CD8-positive, alpha-beta T cell (primary cell): ENCODE measurements at regions of chr1 and their contacts with region 1.

Region 1: DNA sequence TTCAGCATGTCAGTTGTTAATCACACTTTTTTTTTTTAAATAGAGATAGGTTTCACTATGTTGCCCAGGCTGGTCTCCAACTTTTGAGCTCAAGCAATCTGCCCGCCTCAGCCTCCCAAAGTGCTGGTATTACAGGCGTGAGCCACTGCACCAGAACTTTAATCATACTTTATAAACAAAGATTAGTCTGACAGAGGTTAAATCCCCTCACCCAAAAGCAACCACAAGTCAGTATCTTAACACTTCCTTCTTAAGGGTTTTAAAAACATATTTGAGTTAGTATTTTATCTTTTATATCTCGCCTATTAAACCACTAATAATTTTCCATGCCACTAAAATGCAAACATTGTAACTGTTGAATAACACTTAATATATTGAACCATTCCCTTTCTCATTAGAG is 70.2 kb downstream of the COP1 start:
- DNase-seq: no peak
- ATAC-seq: no peak
- H3K4me3 ChIP-seq: no peak overlapping the region
- H3K4me3 Mint-ChIP-seq: no peak overlapping the region
- H3K27ac ChIP-seq: no peak overlapping the region
- H3K27ac Mint-ChIP-seq: no peak overlapping the region
- H3K4me1 ChIP-seq: no peaks in the 10 kb centered on the region
- H3K4me1 Mint-ChIP-seq: peaks cover 43% of the 10 kb centered on the region
- H3K27me3 ChIP-seq: no peaks in the 10 kb centered on the region
- H3K27me3 Mint-ChIP-seq: no peaks in the 10 kb centered on the region
- CTCF ChIP-seq: no peak

Region 2: GRCh38 chr1:176119549-176119948 is 17.3 kb before region 1 on chr1:
- CTCF ChIA-PET with region 1: no interaction called
- POLR2A ChIA-PET with region 1: no interaction called
- intact Hi-C with region 1: no loop called
- DNase-seq: peak in 2 of 9 experiments; percentile 2 to 16
- ATAC-seq: no peak
- H3K4me3 ChIP-seq: no peak overlapping the region
- H3K4me3 Mint-ChIP-seq: no peak overlapping the region
- H3K27ac ChIP-seq: no peak overlapping the region
- H3K27ac Mint-ChIP-seq: no peak overlapping the region
- H3K4me1 ChIP-seq: no peaks in the 10 kb centered on the region
- H3K4me1 Mint-ChIP-seq: no peaks in the 10 kb centered on the region
- H3K27me3 ChIP-seq: no peaks in the 10 kb centered on the region
- H3K27me3 Mint-ChIP-seq: no peaks in the 10 kb centered on the region
- CTCF ChIP-seq: no peak

Region 3: GRCh38 chr1:176174108-176174507 is 37.2 kb after region 1 on chr1:
- CTCF ChIA-PET with region 1: no interaction called
- POLR2A ChIA-PET with region 1: no interaction called
- intact Hi-C with region 1: loop called in 1 of 2 experiments (anchors 5 kb)
- DNase-seq: no peak
- ATAC-seq: no peak
- H3K4me3 ChIP-seq: no peak overlapping the region
- H3K4me3 Mint-ChIP-seq: no peak overlapping the region
- H3K27ac ChIP-seq: no peak overlapping the region
- H3K27ac Mint-ChIP-seq: peak overlapping the region; percentile 13
- H3K4me1 ChIP-seq: no peaks in the 10 kb centered on the region
- H3K4me1 Mint-ChIP-seq: peaks cover 33% of the 10 kb centered on the region
- H3K27me3 ChIP-seq: no peaks in the 10 kb centered on the region
- H3K27me3 Mint-ChIP-seq: no peaks in the 10 kb centered on the region
- CTCF ChIP-seq: no peak